Right ventricle myocardium inferior (tissue), 1 donor: ENCODE measurements at regions of chr2 and their contacts with region 1.

Region 1: DNA sequence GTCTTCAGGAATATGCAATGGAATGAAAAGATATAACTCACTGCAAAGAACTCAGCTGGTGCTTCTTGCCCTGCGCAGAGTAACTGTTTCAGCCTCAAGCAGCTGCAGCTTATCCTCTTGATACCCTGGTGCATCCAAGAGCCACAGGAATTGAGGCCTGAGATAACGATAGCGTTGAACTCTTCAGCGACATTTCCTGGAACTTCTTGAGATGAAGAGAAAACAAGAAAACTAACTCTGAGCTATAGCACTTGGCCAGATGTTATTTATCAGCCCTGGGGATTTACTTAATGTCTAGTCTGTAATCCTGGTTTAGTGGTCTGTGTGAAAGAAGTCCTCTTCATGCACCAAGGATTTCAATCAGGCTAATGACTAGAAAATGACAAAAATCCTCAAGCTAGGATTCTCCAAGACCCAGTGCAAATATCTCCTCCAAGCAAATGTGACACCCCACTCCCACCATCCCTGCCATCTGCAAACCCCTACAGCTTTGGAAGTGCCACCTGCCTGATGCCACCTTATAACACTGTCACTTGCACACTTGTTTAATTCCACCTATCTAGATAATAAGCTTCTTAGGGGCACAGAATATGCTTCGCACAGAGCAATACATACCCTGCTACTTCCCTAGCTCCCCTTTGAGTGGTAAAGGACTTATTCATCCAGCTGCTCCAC is 40.6 kb downstream of the EHD3 start:
- DNase-seq: no peak
- ATAC-seq: no peak

Region 2: DNA sequence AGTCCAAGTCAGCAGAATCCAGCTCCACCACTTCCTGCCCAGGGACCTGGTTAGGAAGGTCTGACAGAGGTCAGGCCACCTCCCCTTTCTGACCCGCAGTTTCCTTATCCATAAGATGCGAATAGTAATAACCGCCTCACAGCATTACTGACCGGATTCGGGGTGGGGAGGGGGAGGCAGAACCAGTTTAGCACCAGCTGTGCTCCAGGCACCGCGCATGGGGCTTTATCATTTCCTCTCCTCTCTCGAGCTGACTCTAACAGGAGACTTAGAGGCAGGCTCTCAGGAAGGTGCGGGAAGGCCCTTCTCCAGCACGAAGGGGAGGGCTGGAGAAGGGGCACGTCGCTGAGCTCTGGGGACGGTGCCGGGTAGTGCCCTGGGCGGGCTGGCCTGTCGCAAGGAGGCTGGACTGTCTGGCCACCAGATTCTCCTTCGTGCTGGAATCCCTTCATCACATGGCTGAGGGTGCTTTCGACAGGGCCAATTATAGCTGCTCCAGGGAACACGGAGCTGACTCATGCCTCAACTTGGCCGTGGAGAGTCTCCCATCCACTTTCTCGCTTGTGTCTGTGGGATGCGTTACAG is 34.9 kb before region 1 on chr2:
- intact Hi-C with region 1: loop called (anchors 5 kb)
- DNase-seq: peak; percentile 78
- ATAC-seq: peak; percentile 90